Dendritic cell treated with granulocyte-macrophage colony-stimulating factor and Interleukin-4, amounts not matched to agents 40 ng/mL and 50 ng/mL, for 4 days (primary cell): ENCODE measurements at regions of chr2 and their contacts with region 1.

Region 1: DNA sequence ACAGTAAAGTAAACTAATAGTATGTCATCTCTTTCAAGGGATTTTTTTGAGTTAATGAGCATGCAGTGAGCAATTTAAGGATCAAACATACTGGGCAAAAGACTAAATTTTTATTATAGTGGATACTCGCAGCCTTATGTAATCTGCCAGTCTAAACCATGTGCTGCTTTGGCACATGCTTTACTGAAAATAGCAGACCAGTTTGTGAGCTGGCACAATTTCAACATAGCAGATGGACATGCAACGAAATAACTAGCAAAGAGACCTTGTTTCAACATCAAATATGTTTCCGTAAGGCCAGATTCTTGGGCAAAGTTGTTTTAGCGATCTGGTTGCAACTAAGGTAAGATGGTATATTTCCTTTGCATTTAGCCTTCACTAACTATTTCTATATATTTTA is 807.3 kb downstream of the NR4A2 start:
- H3K4me3 Mint-ChIP-seq: no peak overlapping the region
- H3K27ac Mint-ChIP-seq: no peak overlapping the region
- H3K4me1 Mint-ChIP-seq: no peaks in the 10 kb centered on the region
- H3K27me3 Mint-ChIP-seq: no peaks in the 10 kb centered on the region

Region 2: DNA sequence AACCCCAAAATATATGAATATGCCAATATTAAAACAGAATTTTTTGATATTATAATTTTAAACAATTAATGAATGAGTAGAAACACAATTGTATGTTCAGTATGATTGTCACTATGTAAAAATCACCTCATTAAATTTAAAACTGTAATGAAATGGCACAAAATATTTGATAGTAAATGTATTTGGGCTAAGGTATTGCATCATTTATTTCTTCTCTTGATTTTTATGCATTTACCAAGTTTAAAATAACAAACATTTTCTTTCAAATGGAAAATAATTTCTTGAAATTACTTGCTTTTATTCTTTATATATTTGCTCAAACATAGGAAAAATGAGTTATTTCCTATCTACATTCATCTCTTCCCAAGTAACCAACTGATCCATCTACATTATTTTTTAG is 44.1 kb before region 1 on chr2:
- intact Hi-C with region 1: loop called (anchors 2 kb)
- H3K4me3 Mint-ChIP-seq: no peak overlapping the region
- H3K27ac Mint-ChIP-seq: no peak overlapping the region
- H3K4me1 Mint-ChIP-seq: no peaks in the 10 kb centered on the region
- H3K27me3 Mint-ChIP-seq: no peaks in the 10 kb centered on the region

Region 3: DNA sequence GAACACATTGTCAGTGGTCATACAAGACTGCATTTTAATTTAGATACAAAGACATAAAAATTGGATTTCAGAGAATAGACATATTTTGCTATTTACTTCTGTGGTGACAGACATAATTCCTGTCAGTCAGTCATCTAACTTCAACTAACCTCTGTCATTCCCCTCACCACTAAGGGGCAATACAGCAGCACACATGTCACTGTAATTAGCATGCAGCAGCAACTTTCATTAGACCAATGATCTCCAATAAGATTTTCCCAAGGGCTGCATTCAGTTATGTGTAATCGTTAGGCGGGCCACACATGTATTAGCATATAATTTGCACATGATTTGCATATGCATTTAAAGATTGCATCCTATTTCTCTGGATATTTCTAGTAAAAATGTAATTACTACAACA is 182.9 kb after region 1 on chr2:
- intact Hi-C with region 1: no loop called
- H3K4me3 Mint-ChIP-seq: no peak overlapping the region
- H3K27ac Mint-ChIP-seq: no peak overlapping the region
- H3K4me1 Mint-ChIP-seq: no peaks in the 10 kb centered on the region
- H3K27me3 Mint-ChIP-seq: peaks cover 4% of the 10 kb centered on the region

Region 4: DNA sequence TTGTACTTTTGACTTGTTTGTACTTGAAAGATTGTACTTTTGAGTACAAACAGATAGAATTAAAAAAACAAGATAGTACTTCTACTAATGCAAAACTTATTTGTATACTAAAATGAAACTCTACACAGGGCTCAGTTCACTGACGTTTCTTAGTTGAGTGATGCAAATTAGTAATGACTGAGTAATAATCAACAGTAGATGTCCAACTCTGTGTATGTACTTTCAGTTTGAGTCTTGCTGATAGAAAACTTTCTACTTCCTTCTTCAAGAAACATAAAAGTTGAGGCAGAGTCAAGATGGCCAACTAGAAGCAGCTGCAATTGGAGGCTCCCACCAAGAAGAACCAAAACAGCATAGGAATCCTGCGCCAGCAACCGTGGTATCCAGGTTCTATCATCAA is 222.3 kb after region 1 on chr2:
- intact Hi-C with region 1: no loop called
- H3K4me3 Mint-ChIP-seq: no peak overlapping the region
- H3K27ac Mint-ChIP-seq: no peak overlapping the region
- H3K4me1 Mint-ChIP-seq: no peaks in the 10 kb centered on the region
- H3K27me3 Mint-ChIP-seq: no peaks in the 10 kb centered on the region

Region 5: GRCh38 chr2:156399722-156400244 is 874.6 kb after region 1 on chr2:
- intact Hi-C with region 1: no loop called
- H3K4me3 Mint-ChIP-seq: peak overlapping the region; percentile 91
- H3K27ac Mint-ChIP-seq: peak overlapping the region; percentile 90
- H3K4me1 Mint-ChIP-seq: peaks cover 59% of the 10 kb centered on the region
- H3K27me3 Mint-ChIP-seq: no peaks in the 10 kb centered on the region